ENCODE measurements at regions of chr1 and their contacts with region 1.

Region 1: DNA sequence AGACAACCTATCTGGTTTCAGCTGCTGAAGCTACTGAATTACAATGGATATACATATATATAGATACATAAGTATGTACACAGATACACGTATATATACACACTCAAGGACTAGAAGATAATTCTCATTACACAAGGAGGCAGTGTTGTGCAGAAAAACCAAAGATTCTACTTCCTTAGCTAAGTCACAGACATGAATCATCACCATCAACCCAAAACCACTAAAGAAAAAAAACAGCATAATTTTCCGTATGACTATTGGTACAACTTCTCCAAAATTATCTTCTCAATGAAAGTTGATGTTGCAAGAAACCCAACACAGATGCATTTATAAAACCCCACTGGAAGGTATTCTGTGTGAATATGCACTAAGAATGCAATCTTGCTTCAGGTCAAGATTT is 36.8 kb upstream of the RPF1 start:
- DNase-seq: no peak
- ATAC-seq: peak; percentile 98
- H3K4me3 Mint-ChIP-seq: no peak overlapping the region
- H3K27ac Mint-ChIP-seq: peak overlapping the region; percentile 80
- H3K4me1 Mint-ChIP-seq: peaks cover 23% of the 10 kb centered on the region
- H3K27me3 Mint-ChIP-seq: peaks cover 6% of the 10 kb centered on the region

Region 2: DNA sequence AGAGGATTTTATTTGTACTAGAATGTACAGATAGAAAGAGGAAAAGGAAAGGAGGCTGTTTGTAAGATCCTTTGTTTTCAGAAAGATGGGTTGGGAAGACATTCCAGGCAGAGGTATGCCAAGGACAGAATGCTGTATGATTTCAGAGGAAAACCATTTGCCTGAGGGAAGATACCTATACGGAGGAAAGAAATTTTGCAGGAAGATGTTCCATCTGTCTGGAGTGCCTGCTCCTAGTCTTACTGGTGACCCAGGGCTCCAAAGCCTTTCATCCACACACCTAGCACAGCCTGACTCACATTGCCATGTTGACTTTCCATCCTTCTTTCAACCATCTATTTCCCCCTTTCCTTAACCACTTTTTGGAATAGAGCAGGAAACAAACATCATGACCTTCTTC is 122.6 kb before region 1 on chr1:
- CTCF ChIA-PET with region 1: no interaction called
- DNase-seq: no peak
- ATAC-seq: no peak
- H3K4me3 Mint-ChIP-seq: no peak overlapping the region
- H3K27ac Mint-ChIP-seq: no peak overlapping the region
- H3K4me1 Mint-ChIP-seq: peaks cover 6% of the 10 kb centered on the region
- H3K27me3 Mint-ChIP-seq: no peaks in the 10 kb centered on the region

Region 3: GRCh38 chr1:84370831-84371394 is 71.3 kb before region 1 on chr1:
- CTCF ChIA-PET with region 1: no interaction called
- DNase-seq: no peak
- ATAC-seq: no peak
- H3K4me3 Mint-ChIP-seq: no peak overlapping the region
- H3K27ac Mint-ChIP-seq: no peak overlapping the region
- H3K4me1 Mint-ChIP-seq: peaks cover under 1% of the 10 kb centered on the region
- H3K27me3 Mint-ChIP-seq: no peaks in the 10 kb centered on the region

Region 4: DNA sequence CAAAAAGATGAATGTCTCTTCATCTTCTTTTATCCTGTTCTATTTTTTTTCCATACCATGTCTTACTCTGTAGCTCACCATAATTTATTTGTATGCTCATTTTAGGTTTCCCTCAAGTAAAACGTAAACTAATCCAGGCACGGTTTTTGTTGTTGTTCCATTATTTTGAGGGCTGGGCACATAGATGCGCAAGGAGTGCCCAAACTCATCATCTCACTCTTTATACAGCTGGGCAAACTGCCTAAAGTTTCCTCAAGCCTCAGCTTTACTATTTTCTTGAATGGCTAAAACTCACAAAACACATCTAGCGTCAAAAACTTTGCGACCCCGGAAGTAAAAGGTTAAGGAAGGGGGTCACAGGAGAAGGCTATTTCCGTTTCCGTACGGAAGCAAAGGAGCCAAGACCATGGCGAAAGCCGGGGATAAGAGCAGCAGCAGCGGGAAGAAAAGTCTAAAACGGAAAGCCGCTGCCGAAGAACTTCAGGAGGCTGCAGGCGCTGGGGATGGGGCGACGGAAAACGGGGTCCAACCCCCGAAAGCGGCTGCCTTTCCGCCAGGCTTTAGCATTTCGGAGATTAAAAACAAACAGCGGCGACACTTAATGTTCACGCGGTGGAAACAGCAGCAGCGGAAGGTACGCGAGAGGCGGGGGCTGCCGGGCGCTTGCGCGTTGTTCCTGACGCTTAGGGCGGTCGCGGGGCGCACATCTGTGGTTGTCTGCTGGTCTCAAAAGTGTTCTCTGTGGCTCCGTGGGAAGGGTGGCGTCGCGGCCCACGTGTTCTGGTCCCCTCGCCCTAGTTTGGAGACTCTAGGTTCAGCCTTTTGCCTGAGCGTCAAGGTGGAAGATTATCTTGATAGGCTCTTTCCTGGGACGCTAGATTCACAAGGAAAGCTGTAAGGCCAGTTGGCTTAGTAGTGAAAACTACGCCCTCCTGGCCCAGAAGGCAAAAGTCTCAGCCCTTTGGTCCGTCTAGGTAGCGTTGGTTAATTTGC is 36.9 kb after region 1 on chr1 and contains the start of gene RPF1:
- CTCF ChIA-PET with region 1: interaction called, 13 read pairs
- DNase-seq: peak; percentile 85
- ATAC-seq: peak; percentile 96
- H3K4me3 Mint-ChIP-seq: peak within 1 kb of the TSS; percentile 92
- H3K27ac Mint-ChIP-seq: peak within 1 kb of the TSS; percentile 94
- H3K4me1 Mint-ChIP-seq: peaks cover 30% of the 10 kb centered on the region
- H3K27me3 Mint-ChIP-seq: peaks cover 21% of the 10 kb centered on the region
- total RNA-seq, gene RPF1: 29.7 to 43.2 TPM

Region 5: DNA sequence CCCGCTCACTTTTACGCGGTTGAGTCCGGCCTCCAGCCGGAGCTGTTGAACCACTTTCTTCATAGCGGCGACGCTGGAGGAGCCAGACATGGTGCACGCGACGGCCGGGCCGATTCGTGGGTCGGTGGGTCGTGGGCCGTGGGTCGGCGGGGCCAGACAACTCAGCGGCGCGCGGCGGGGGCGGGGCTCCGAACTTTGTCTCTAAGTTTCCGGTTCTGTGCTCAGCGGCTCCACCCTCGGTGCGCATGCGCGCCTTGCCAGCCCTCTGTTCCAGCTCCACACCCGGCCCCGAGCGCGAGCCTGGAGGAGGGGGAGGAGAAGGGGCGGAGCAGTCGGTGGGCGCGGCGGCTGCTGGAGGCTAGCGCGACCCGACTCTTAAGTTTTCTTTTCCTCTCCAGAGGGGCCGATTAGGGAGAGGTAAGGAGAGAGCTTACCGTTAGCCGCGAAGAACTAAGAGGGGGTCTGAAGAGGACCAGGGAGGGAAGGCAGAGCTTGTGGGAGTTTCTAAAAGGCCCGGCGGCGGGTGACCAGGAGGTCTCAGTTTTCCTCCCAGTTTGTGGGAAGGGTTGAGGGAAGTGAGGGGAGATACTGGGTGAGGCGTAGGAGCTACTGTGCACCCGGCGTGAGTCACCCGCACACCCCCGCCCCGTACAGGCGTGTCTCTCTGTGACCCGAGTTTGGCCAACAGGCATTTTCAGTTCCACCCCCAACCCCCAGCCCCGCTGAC is 63.9 kb after region 1 on chr1 and contains the starts of genes GNG5 and SPATA1:
- CTCF ChIA-PET with region 1: interaction called, 11 read pairs
- DNase-seq: peak; percentile 99
- ATAC-seq: peak; percentile 92
- H3K4me3 Mint-ChIP-seq: peak within 1 kb of the TSS; percentile 96
- H3K27ac Mint-ChIP-seq: peak within 1 kb of the TSS; percentile 98
- H3K4me1 Mint-ChIP-seq: peaks cover 37% of the 10 kb centered on the region
- H3K27me3 Mint-ChIP-seq: no peaks in the 10 kb centered on the region
- total RNA-seq, gene GNG5: 103 to 114 TPM
- total RNA-seq, gene SPATA1: 2.1 to 6.1 TPM

Region 6: DNA sequence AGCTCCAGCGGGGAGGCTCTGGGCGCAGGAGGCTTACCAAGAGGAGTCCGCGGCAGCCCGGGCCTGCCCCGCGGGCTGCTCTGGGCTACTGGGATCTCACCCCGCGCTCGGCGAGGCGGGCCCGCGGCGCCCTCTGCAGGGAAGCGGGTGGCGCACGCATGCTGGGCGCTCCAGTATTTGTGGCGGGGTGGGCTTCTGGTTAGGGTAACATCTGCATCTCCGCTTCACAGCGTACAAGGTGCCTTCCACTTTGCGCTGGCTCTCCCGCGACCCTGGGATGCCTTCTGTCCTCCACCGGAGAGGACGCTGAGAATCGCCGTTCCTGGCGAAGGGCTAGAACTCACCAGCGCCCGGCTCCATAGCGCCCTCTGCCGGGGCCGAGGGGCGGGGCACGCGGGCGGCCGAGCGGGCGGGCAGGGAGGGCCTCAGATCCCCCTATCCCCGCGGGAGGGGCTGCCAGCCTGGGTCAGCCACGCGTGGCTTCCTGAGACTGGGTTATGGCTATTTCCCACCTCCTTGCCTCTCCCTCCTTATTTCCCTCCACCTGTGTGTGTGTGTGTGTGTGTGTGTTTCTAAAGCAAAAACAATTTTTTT is 178.6 kb after region 1 on chr1:
- CTCF ChIA-PET with region 1: interaction called, 47 read pairs
- DNase-seq: peak; percentile 85
- ATAC-seq: peak; percentile 95
- H3K4me3 Mint-ChIP-seq: peak overlapping the region; percentile 86
- H3K27ac Mint-ChIP-seq: peak overlapping the region; percentile 89
- H3K4me1 Mint-ChIP-seq: peaks cover 22% of the 10 kb centered on the region
- H3K27me3 Mint-ChIP-seq: no peaks in the 10 kb centered on the region

Region 7: DNA sequence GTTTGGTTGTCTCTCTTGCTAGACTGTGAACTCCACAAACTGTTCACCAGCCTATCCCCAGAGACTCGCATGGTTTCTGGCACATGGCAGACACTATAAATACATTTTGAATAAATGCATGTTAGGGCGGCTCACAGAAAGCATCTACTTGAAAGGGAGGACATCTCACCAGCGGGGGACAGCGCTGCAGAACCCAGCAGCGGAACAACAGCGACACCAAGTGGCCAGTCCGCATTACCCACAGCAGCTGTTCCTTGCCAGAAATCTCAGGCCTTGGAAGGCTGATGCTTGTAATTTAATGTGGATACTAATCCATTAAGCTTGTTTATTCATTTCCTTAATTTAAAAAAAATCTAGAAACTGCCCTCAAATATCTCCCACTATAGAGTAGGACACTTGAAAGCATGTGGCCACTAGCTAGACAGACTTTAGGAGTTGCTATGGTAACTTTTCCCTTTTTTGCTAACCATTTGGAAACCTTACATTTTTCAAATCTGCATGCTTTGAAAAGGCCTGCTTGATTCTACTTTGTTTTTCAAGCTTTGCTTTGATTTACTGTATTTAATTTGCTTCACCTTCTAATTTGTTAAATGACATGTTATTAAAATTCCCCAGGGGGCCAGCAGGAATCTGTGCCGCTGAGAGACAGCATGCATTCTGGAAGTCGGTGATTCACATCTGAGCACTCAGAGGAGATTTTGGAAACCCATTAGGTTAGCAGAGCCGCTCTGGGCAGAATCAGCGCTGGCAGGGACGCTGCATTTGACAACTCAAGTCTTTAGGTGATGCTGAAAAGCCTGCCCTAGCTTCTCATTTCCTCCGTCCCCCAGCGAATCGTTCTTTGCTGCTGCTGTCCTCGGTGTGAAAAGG is 311.5 kb after region 1 on chr1:
- CTCF ChIA-PET with region 1: interaction called, 33 read pairs
- DNase-seq: peak; percentile 75
- ATAC-seq: peak; percentile 88
- H3K4me3 Mint-ChIP-seq: no peak overlapping the region
- H3K27ac Mint-ChIP-seq: no peak overlapping the region
- H3K4me1 Mint-ChIP-seq: peaks cover 15% of the 10 kb centered on the region
- H3K27me3 Mint-ChIP-seq: peaks cover 4% of the 10 kb centered on the region

Region 8: DNA sequence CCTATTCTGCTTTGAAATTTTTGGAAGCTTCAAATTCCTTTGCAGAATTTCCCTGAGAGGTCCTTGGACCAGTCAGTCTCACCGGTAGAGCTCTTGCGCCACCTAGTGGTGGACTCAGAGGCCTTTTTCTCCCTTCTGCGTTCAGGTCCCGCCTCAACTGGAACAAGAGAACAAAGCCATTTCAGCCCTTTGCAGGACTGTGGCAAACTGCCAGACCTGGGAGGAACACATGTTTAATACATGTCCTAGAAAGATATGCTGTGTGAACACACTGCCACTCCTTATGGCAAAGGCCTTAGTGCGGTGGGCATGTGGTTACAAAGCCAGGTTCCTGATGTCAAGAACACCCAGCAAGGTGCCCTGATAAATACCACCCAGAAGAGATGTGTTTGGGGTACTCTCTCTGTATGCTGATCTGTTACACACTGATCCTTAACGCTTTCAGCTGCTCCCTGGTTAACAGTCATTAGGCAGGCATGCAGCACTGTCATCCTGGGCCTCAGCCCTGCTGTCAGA is 330.2 kb after region 1 on chr1:
- CTCF ChIA-PET with region 1: interaction called, 11 read pairs
- DNase-seq: peak; percentile 80
- ATAC-seq: peak; percentile 70
- H3K4me3 Mint-ChIP-seq: no peak overlapping the region
- H3K27ac Mint-ChIP-seq: no peak overlapping the region
- H3K4me1 Mint-ChIP-seq: no peaks in the 10 kb centered on the region
- H3K27me3 Mint-ChIP-seq: peaks cover 14% of the 10 kb centered on the region

Measured in activated CD8-positive, alpha-beta memory T cell treated with anti-CD3 and anti-CD28 coated beads, Interleukin-2, amount 10 ng/mL, durations not matched to agents 7 days and 5 days (primary cell).